ENCODE measurements at regions of chr7 and their contacts with region 1.

Region 1: DNA sequence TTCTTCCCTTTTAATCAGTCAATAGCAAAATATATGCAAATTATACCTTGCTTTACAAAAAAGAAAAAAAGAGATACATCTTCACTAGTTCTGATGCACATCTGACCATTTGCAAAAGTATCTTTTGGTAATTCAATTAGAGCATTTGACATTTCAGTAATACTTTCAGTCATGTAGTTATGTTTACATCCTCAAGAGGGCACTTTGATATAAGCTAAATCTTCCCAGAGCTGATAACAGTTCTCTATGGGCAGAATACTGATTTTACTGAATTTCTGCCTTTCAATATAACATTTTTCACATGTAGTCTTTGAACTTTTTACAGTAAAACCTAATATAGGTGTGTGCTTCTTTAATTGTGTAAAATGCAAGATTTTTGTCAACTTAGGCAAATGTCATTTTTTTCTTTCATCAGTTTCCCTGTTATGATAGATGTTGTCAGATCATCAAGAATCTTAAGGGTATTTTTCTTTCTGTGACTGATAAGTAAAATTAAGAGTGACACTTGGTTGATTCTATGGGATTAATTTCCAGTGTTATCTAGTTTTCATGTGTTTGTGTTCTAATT is 703.5 kb upstream of the SEMA3D start:
- DNase-seq: peak; percentile 12
- ATAC-seq: peak; percentile 69; the same call in 1 of the 2 replicates
- H3K4me3 ChIP-seq: no peak overlapping the region
- H3K27ac ChIP-seq: no peak overlapping the region
- H3K4me1 ChIP-seq: no peaks in the 10 kb centered on the region
- H3K27me3 ChIP-seq: no peaks in the 10 kb centered on the region
- CTCF ChIP-seq: peak; percentile 56; the same call in 1 of the 2 replicates

Region 2: DNA sequence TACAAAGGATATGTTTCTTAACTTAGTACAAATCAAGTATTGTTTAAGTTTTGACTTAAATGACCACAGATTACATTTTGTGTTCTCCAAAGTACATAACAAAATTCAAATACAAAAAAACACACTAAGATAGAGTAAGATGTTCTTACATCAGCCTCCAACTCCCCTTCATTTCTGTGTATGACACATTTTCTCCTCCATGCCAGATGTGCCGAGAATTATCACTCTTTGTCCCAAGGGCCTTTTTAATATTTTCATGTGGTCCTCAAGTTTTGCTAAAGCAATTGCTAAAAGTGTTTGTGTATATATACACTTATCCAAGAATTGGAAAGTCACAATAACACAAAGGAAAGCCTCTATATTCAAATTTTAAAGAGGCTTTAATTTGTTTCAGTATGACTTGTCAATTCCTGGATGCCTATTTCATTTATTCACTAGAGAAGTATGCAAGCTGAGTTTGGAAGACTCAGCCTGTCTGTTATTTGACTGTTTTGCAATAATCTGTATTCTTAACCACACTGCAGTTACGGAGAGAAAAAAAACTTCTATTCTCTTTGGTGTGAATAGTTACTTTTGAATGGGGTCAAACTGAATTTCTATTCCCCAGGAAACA is 117.1 kb before region 1 on chr7:
- CTCF ChIA-PET with region 1: no interaction called
- POLR2A ChIA-PET with region 1: no interaction called
- in situ Hi-C with region 1: no loop called
- intact Hi-C with region 1: no loop called
- DNase-seq: no peak
- ATAC-seq: no peak
- H3K4me3 ChIP-seq: no peak overlapping the region
- H3K27ac ChIP-seq: no peak overlapping the region
- H3K4me1 ChIP-seq: no peaks in the 10 kb centered on the region
- H3K27me3 ChIP-seq: no peaks in the 10 kb centered on the region
- CTCF ChIP-seq: no peak

Region 3: GRCh38 chr7:85796956-85797355 is 93.4 kb before region 1 on chr7:
- CTCF ChIA-PET with region 1: no interaction called
- POLR2A ChIA-PET with region 1: no interaction called
- in situ Hi-C with region 1: no loop called
- intact Hi-C with region 1: no loop called
- DNase-seq: no peak
- ATAC-seq: no peak
- H3K4me3 ChIP-seq: no peak overlapping the region
- H3K27ac ChIP-seq: no peak overlapping the region
- H3K4me1 ChIP-seq: no peaks in the 10 kb centered on the region
- H3K27me3 ChIP-seq: no peaks in the 10 kb centered on the region
- CTCF ChIP-seq: no peak

Region 4: GRCh38 chr7:86444245-86444644 is 553.9 kb after region 1 on chr7:
- CTCF ChIA-PET with region 1: no interaction called
- POLR2A ChIA-PET with region 1: no interaction called
- in situ Hi-C with region 1: no loop called
- intact Hi-C with region 1: no loop called
- DNase-seq: no peak
- ATAC-seq: no peak
- H3K4me3 ChIP-seq: no peak overlapping the region
- H3K27ac ChIP-seq: no peak overlapping the region
- H3K4me1 ChIP-seq: no peaks in the 10 kb centered on the region
- H3K27me3 ChIP-seq: no peaks in the 10 kb centered on the region
- CTCF ChIP-seq: no peak

Region 5: GRCh38 chr7:86469680-86470295 is 579.5 kb after region 1 on chr7:
- CTCF ChIA-PET with region 1: interaction called, 3 read pairs
- POLR2A ChIA-PET with region 1: no interaction called
- in situ Hi-C with region 1: no loop called
- intact Hi-C with region 1: loop called (anchors 1 kb)
- DNase-seq: peak; percentile 76
- ATAC-seq: peak; percentile 75; the same call in 1 of the 2 replicates
- H3K4me3 ChIP-seq: no peak overlapping the region
- H3K27ac ChIP-seq: no peak overlapping the region
- H3K4me1 ChIP-seq: no peaks in the 10 kb centered on the region
- H3K27me3 ChIP-seq: no peaks in the 10 kb centered on the region
- CTCF ChIP-seq: peak; percentile 82